GM10248 (cell line): ENCODE measurements at regions of chr12 and their contacts with region 1.

Region 1: GRCh38 chr12:96343347-96343954 is 56.8 kb downstream of the CDK17 start:
- DNase-seq: peak; percentile 29
- CTCF ChIP-seq: no peak

Region 2: GRCh38 chr12:96208801-96209549 is 134.5 kb before region 1 on chr12:
- CTCF ChIA-PET with region 1: no interaction called
- POLR2A ChIA-PET with region 1: no interaction called
- DNase-seq: no peak
- CTCF ChIP-seq: no peak

Region 3: GRCh38 chr12:96327346-96327745 is 16.1 kb before region 1 on chr12:
- CTCF ChIA-PET with region 1: interaction called, 14 read pairs
- POLR2A ChIA-PET with region 1: no interaction called
- DNase-seq: peak; percentile 23
- CTCF ChIP-seq: no peak

Region 4: GRCh38 chr12:96445691-96446583 is 102.5 kb after region 1 on chr12:
- CTCF ChIA-PET with region 1: no interaction called
- POLR2A ChIA-PET with region 1: no interaction called
- DNase-seq: peak; percentile 58
- CTCF ChIP-seq: no peak